ENCODE measurements at regions of chr1 and their contacts with region 1.

Region 1: GRCh38 chr1:100178091-100178490 is at the start of gene LRRC39:
- DNase-seq: no peak
- H3K4me3 ChIP-seq: no peak within 1 kb of the TSS
- H3K27ac ChIP-seq: no peak within 1 kb of the TSS
- H3K4me1 ChIP-seq: no peaks in the 10 kb centered on the region
- H3K27me3 ChIP-seq: no peaks in the 10 kb centered on the region
- CTCF ChIP-seq: no peak
- total RNA-seq, gene LRRC39: 0.37 TPM in 1 of 2 donors, not detected in the other

Region 2: GRCh38 chr1:100229681-100230443 is 51.8 kb after region 1 on chr1:
- intact Hi-C with region 1: loop called (anchors 5 kb)
- DNase-seq: no peak
- H3K4me3 ChIP-seq: no peak overlapping the region
- H3K27ac ChIP-seq: no peak overlapping the region
- H3K4me1 ChIP-seq: no peaks in the 10 kb centered on the region
- H3K27me3 ChIP-seq: no peaks in the 10 kb centered on the region
- CTCF ChIP-seq: no peak

Region 3: GRCh38 chr1:100322436-100323211 is 144.5 kb after region 1 on chr1:
- intact Hi-C with region 1: no loop called
- DNase-seq: no peak
- H3K4me3 ChIP-seq: no peak overlapping the region
- H3K27ac ChIP-seq: no peak overlapping the region
- H3K4me1 ChIP-seq: no peaks in the 10 kb centered on the region
- H3K27me3 ChIP-seq: no peaks in the 10 kb centered on the region
- CTCF ChIP-seq: no peak

Region 4: DNA sequence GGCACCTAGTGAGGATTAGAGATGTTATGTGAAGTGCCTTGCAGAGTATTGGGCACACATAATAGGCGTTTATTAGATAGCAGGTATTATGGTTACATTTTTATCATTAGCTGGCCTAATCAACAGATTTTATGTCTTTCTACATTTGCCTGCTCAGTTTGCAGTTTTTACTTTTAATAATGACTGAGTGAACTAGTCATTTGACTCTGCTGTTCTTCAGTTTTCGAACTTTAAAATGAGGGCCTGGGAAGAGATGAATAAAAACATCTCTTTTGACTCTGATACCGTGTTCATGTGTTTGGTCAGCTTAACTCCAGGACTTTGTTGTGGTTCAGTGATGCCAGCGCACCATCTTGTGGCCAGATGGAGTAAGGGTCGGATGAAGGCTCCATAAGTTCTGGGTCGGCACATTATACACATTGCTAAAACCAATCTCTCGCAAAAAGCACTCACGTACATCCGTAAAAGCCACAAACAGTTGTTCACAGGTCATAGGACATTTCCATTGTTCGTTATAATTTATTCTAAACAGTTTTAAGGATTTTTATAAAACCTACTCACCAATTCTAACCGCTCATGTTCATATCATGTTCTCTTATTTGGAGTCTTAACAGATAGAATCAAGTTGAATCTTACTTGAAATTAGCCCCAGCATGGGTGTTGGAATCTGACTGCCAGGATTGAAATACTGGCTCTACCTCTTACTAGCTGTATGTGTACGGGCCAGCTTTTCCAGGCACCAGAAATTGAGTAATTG is 281.4 kb after region 1 on chr1:
- intact Hi-C with region 1: no loop called
- DNase-seq: peak; percentile 73
- H3K4me3 ChIP-seq: no peak overlapping the region
- H3K27ac ChIP-seq: no peak overlapping the region
- H3K4me1 ChIP-seq: no peaks in the 10 kb centered on the region
- H3K27me3 ChIP-seq: no peaks in the 10 kb centered on the region
- CTCF ChIP-seq: peak; percentile 74

Measured in colonic mucosa (tissue), 4 donors.